Activated B cell treated with CpG ODN at 0.5 μM for 24 hours (primary cell): ENCODE measurements at regions of chr16 and their contacts with region 1.

Region 1: GRCh38 chr16:9134739-9135138 is 43.3 kb downstream of the HAPSTR1 start:
- DNase-seq: peak; percentile 52
- ATAC-seq: peak; percentile 73
- H3K4me3 Mint-ChIP-seq: peak overlapping the region; percentile 15
- H3K27ac Mint-ChIP-seq: peak overlapping the region; percentile 53
- H3K4me1 Mint-ChIP-seq: peaks cover 38% of the 10 kb centered on the region
- H3K27me3 Mint-ChIP-seq: no peaks in the 10 kb centered on the region
- CTCF ChIP-seq: peak; percentile 41

Region 2: GRCh38 chr16:8567750-8568617 is 566.8 kb before region 1 on chr16:
- CTCF ChIA-PET with region 1: interaction called, 7 read pairs
- POLR2A ChIA-PET with region 1: no interaction called
- intact Hi-C with region 1: loop called (anchors 1 kb)
- DNase-seq: peak; percentile 64
- ATAC-seq: peak; percentile 94
- H3K4me3 Mint-ChIP-seq: no peak overlapping the region
- H3K27ac Mint-ChIP-seq: no peak overlapping the region
- H3K4me1 Mint-ChIP-seq: peaks cover 3% of the 10 kb centered on the region
- H3K27me3 Mint-ChIP-seq: peaks cover 8% of the 10 kb centered on the region
- CTCF ChIP-seq: peak; percentile 88

Region 3: GRCh38 chr16:8885674-8886592 is 248.8 kb before region 1 on chr16:
- CTCF ChIA-PET with region 1: interaction called, 16 read pairs
- POLR2A ChIA-PET with region 1: interaction called, 17 read pairs
- intact Hi-C with region 1: loop called (anchors 1 kb)
- DNase-seq: no peak
- ATAC-seq: peak; percentile 22
- H3K4me3 Mint-ChIP-seq: no peak overlapping the region
- H3K27ac Mint-ChIP-seq: peak overlapping the region; percentile 19
- H3K4me1 Mint-ChIP-seq: peaks cover 24% of the 10 kb centered on the region
- H3K27me3 Mint-ChIP-seq: peaks cover 10% of the 10 kb centered on the region
- CTCF ChIP-seq: no peak

Region 4: GRCh38 chr16:8936421-8936820 is 198.3 kb before region 1 on chr16:
- CTCF ChIA-PET with region 1: interaction called, 18 read pairs
- POLR2A ChIA-PET with region 1: no interaction called
- intact Hi-C with region 1: loop called (anchors 2 kb)
- DNase-seq: no peak
- ATAC-seq: peak; percentile 98
- H3K4me3 Mint-ChIP-seq: no peak overlapping the region
- H3K27ac Mint-ChIP-seq: peak overlapping the region; percentile 50
- H3K4me1 Mint-ChIP-seq: peaks cover 92% of the 10 kb centered on the region
- H3K27me3 Mint-ChIP-seq: no peaks in the 10 kb centered on the region
- CTCF ChIP-seq: no peak

Region 5: GRCh38 chr16:9033125-9033830 is 101.5 kb before region 1 on chr16:
- CTCF ChIA-PET with region 1: no interaction called
- POLR2A ChIA-PET with region 1: no interaction called
- intact Hi-C with region 1: loop called (anchors 10 kb)
- DNase-seq: no peak
- ATAC-seq: no peak
- H3K4me3 Mint-ChIP-seq: no peak overlapping the region
- H3K27ac Mint-ChIP-seq: no peak overlapping the region
- H3K4me1 Mint-ChIP-seq: no peaks in the 10 kb centered on the region
- H3K27me3 Mint-ChIP-seq: peaks cover 4% of the 10 kb centered on the region
- CTCF ChIP-seq: no peak

Region 6: DNA sequence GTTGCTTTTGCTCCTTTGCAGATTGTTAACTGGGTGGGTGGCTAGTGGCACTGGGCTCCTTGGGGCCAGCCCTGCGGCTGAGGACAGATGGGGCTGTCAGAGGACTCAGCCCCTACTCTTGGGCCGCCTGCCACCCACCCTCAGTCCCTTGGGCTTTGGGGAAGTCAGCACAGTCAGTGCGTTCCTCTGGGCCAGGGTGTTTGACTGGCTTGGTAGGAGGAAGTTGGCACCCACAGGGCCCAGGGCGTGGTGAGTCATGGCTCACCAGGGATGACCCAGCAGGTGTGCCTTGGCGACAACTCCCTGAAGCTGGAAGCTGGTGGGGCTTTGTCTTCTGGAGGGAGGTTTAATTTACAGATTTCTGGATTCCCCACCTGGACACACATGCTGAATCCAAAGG is 10.9 kb before region 1 on chr16:
- CTCF ChIA-PET with region 1: interaction called, 5 read pairs
- POLR2A ChIA-PET with region 1: no interaction called
- intact Hi-C with region 1: loop called (anchors 1 kb)
- DNase-seq: peak; percentile 55
- ATAC-seq: peak; percentile 91
- H3K4me3 Mint-ChIP-seq: peak overlapping the region; percentile 64
- H3K27ac Mint-ChIP-seq: peak overlapping the region; percentile 84
- H3K4me1 Mint-ChIP-seq: peaks cover 72% of the 10 kb centered on the region
- H3K27me3 Mint-ChIP-seq: no peaks in the 10 kb centered on the region
- CTCF ChIP-seq: no peak

Region 7: GRCh38 chr16:9232102-9232770 is 97.5 kb after region 1 on chr16:
- CTCF ChIA-PET with region 1: no interaction called
- POLR2A ChIA-PET with region 1: no interaction called
- intact Hi-C with region 1: no loop called
- DNase-seq: no peak
- ATAC-seq: no peak
- H3K4me3 Mint-ChIP-seq: no peak overlapping the region
- H3K27ac Mint-ChIP-seq: no peak overlapping the region
- H3K4me1 Mint-ChIP-seq: no peaks in the 10 kb centered on the region
- H3K27me3 Mint-ChIP-seq: peaks cover 18% of the 10 kb centered on the region
- CTCF ChIP-seq: no peak

Region 8: GRCh38 chr16:10737068-10737625 is 1602.4 kb after region 1 on chr16:
- CTCF ChIA-PET with region 1: interaction called, 5 read pairs
- POLR2A ChIA-PET with region 1: no interaction called
- intact Hi-C with region 1: loop called (anchors 1 kb)
- DNase-seq: no peak
- ATAC-seq: peak; percentile 65
- H3K4me3 Mint-ChIP-seq: peak overlapping the region; percentile 68
- H3K27ac Mint-ChIP-seq: peak overlapping the region; percentile 90
- H3K4me1 Mint-ChIP-seq: peaks cover 51% of the 10 kb centered on the region
- H3K27me3 Mint-ChIP-seq: no peaks in the 10 kb centered on the region
- CTCF ChIP-seq: peak; percentile 60